Endothelial cell of umbilical vein (primary cell): ENCODE measurements at regions of chr5 and their contacts with region 1.

Region 1: GRCh38 chr5:151126199-151126645 is 31.4 kb downstream of the ANXA6 start:
- DNase-seq: peak; percentile 57
- H3K4me3 ChIP-seq: no peak overlapping the region
- H3K27ac ChIP-seq: no peak overlapping the region
- H3K4me1 ChIP-seq: no peaks in the 10 kb centered on the region
- H3K27me3 ChIP-seq: no peaks in the 10 kb centered on the region
- CTCF ChIP-seq: peak; percentile 69 to 86
- POLR2A ChIP-seq: no peak

Region 2: GRCh38 chr5:151037561-151038411 is 88.4 kb before region 1 on chr5:
- CTCF ChIA-PET with region 1: interaction called, 12 read pairs
- POLR2A ChIA-PET with region 1: no interaction called
- dilution Hi-C with region 1: no loop called
- intact Hi-C with region 1: no loop called
- DNase-seq: peak; percentile 86
- H3K4me3 ChIP-seq: no peak overlapping the region
- H3K27ac ChIP-seq: peak overlapping the region; percentile 36
- H3K4me1 ChIP-seq: peaks cover 21% of the 10 kb centered on the region
- H3K27me3 ChIP-seq: no peaks in the 10 kb centered on the region
- CTCF ChIP-seq: no peak
- POLR2A ChIP-seq: no peak

Region 3: DNA sequence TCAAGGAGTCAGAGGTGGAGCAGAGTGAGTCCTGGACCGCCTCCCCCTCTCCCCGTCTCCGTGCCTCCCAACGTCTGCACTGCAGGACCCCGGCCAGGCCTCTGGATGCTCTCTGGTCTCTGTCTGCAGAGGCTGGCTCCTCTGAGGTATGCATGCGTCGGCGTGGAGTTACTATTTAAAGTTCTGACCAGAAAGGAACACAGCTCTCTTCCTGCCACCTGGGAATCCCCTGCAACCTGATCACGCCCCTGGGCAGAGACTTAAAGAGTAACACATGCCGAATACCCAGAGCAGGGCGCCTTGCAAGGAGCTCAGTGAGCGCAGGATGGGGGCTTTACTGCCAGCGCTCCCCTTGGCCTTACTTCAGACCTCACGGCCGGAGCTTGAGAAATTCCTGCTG is 15.3 kb after region 1 on chr5:
- CTCF ChIA-PET with region 1: interaction called, 23 read pairs
- POLR2A ChIA-PET with region 1: no interaction called
- dilution Hi-C with region 1: no loop called
- intact Hi-C with region 1: no loop called
- DNase-seq: no peak
- H3K4me3 ChIP-seq: no peak overlapping the region
- H3K27ac ChIP-seq: no peak overlapping the region
- H3K4me1 ChIP-seq: peaks cover 6% of the 10 kb centered on the region
- H3K27me3 ChIP-seq: no peaks in the 10 kb centered on the region
- CTCF ChIP-seq: no peak
- POLR2A ChIP-seq: no peak

Region 4: GRCh38 chr5:151157426-151158286 is 31.4 kb after region 1 on chr5 and contains the start of gene ANXA6:
- CTCF ChIA-PET with region 1: interaction called, 409 read pairs
- POLR2A ChIA-PET with region 1: no interaction called
- dilution Hi-C with region 1: no loop called
- intact Hi-C with region 1: loop called (anchors 2 kb)
- DNase-seq: peak; percentile 83
- H3K4me3 ChIP-seq: peak within 1 kb of the TSS; percentile 73 to 92 (median 81)
- H3K27ac ChIP-seq: peak within 1 kb of the TSS; percentile 37
- H3K4me1 ChIP-seq: peaks cover 25% of the 10 kb centered on the region
- H3K27me3 ChIP-seq: no peaks in the 10 kb centered on the region
- CTCF ChIP-seq: no peak
- POLR2A ChIP-seq: no peak
- total RNA-seq, gene ANXA6: 240 and 266 TPM in 2 replicates

Region 5: DNA sequence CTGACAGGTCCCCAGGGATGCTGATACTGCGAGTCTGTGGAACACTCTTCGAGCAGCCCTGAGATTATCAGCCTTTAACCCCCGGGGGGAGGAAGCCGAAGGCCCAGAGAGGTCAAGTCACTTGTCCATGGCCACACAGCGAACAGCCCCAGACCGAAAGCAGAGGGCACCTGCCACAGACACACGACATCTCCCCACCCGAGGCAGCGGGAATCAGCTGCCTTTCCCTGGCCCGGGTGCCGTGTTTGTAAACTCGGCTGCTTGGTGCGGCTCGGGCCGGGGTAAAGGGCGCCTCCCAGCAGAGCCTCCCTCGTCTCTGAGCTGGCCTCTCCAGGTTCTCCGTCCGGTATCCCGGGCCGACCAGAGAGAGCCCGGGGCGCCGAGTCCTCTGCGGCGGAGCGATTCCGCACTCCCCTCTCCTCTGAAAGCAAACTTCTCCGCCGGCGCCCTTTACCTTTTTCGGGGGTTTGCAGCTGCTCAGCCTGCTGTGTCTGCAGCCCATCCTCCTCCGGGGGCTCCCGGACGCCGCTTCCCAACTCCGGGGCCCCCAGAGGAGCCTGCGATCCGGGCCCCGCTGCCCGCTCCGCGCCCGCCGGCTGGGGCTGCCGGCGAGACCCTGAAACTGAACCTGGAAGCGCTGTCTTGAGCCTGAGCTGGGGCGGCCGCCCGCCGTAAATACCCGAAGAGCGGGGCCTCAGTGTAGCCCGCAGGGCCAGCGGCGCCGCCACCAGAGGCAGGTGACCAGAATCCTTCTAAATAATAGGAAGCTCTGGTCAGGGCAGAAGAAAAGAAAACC is 97.4 kb after region 1 on chr5 and contains the start of gene CCDC69:
- CTCF ChIA-PET with region 1: interaction called, 18 read pairs
- POLR2A ChIA-PET with region 1: no interaction called
- dilution Hi-C with region 1: no loop called
- intact Hi-C with region 1: no loop called
- DNase-seq: peak; percentile 82
- H3K4me3 ChIP-seq: peak within 1 kb of the TSS; percentile 57 to 91 (median 70)
- H3K27ac ChIP-seq: no peak within 1 kb of the TSS
- H3K4me1 ChIP-seq: peaks cover 6% of the 10 kb centered on the region
- H3K27me3 ChIP-seq: no peaks in the 10 kb centered on the region
- CTCF ChIP-seq: peak in 1 of 2 donors; percentile 44
- POLR2A ChIP-seq: peak; percentile 60
- total RNA-seq, gene CCDC69: 4.3 and 4.5 TPM in 2 replicates

Region 6: DNA sequence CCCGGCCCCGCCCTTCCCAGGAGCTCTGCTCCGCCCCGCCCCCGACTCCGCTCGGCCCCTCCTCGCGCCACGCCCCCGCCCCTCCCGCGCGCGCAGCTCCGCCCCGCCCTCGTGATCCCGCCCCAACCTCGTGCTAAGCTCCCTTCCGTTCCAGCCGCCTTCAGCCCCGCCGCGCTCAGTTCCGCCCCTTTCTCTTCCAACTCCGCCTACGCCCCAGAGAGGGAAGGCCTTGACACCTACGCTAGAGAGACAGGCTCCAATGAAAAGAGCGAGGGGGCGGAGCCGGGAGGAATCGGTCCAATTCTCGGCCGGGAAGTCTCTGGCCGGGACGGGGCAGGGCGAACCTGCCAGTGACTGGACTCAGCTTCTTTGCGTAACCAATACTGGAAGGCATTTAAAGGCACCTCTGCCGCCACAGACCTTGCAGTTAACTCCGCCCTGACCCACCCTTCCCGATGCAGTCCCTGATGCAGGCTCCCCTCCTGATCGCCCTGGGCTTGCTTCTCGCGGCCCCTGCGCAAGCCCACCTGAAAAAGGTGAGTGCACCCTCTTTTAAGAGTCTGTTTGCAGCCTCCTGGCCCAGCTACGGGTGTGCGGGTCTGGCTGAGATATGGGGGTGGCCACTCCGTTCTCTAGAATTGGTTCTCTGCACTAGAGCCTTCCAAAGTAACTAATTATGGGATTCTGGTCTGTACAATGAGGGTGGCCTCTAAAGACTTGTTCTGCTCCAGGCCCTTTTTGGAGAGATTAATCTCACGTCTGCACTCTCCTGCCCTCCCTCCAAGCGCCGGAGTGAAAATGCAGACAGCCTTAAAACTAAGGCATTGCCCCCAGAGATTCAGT is 126.8 kb after region 1 on chr5 and contains the start of gene GM2A:
- CTCF ChIA-PET with region 1: interaction called, 13 read pairs
- POLR2A ChIA-PET with region 1: no interaction called
- dilution Hi-C with region 1: no loop called
- intact Hi-C with region 1: no loop called
- DNase-seq: peak; percentile 100
- H3K4me3 ChIP-seq: peak within 1 kb of the TSS; percentile 48 to 75 (median 55)
- H3K27ac ChIP-seq: no peak within 1 kb of the TSS
- H3K4me1 ChIP-seq: peaks cover 5% of the 10 kb centered on the region
- H3K27me3 ChIP-seq: no peaks in the 10 kb centered on the region
- CTCF ChIP-seq: no peak
- POLR2A ChIP-seq: peak; percentile 46
- total RNA-seq, gene GM2A: 21.2 and 22.5 TPM in 2 replicates

Region 7: DNA sequence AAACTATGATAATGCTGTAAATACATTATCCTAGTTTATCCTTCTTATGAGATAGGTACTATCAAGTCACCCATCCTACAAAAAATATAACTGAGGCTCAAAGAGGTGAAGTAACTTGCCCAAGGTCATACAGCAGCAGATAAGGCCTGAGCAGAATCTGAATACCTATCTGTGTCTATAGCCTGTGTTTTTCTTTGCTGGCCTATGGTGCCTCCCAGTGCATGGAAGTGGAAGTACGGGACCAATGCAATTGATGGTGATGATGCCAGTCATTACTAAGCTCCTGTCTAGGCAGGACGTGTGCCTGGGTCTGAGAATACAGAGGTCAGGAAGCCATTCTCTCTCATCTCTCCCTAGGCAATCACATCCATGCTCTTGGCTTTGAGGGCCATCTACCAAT is 397.1 kb after region 1 on chr5:
- CTCF ChIA-PET with region 1: interaction called, 8 read pairs
- POLR2A ChIA-PET with region 1: no interaction called
- dilution Hi-C with region 1: no loop called
- intact Hi-C with region 1: loop called (anchors 1 kb)
- DNase-seq: peak; percentile 52
- H3K4me3 ChIP-seq: no peak overlapping the region
- H3K27ac ChIP-seq: no peak overlapping the region
- H3K4me1 ChIP-seq: no peaks in the 10 kb centered on the region
- H3K27me3 ChIP-seq: peaks cover 0 to 2% of the 10 kb centered on the region in 2 experiments
- CTCF ChIP-seq: peak; percentile 53 to 57
- POLR2A ChIP-seq: no peak